ENCODE measurements at regions of chr3 and their contacts with region 1.

Region 1: GRCh38 chr3:146611096-146611495 is 6.0 kb upstream of the PLSCR5 start:
- DNase-seq: no peak
- ATAC-seq: no peak

Region 2: DNA sequence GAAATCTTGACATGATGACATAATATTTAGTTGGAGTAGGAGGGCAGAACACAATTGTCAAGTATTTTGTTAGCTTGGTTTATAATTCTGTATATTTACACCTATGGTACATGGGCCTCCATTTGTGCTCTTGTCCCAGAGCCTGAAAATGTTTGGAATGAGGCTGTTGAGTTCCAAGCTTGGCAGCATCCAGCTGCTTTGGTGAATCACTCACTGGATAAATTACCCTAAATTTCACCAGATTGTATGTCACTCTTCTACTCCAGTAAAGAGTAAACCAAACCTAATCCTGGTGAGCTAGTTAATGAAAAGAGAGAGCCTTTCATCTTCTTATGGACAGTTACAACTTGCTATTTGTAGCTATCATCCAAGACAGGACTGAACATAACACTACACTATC is 1710.7 kb before region 1 on chr3:
- intact Hi-C with region 1: loop called (anchors 5 kb)
- DNase-seq: no peak
- ATAC-seq: no peak

Region 3: DNA sequence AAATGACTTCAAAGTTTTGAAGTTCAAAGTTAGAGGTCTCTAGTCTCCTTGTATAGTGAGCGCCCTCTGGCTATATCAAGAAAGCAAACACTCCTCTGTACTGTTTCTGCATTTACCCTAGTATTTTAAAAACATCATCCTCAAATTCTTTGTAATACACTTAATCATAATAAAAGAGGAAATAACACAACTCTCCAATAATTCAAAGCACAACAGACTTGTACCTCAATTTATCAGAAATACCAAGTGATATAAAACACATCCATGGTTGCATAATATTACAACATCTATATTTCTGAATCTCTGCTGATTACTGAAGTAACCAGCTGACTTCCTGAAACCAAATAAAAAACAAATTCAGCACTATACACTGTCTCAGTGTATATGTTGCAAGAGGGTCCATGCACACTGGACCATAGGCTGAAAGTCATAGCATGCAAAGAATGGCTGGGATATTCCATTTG is 462.6 kb before region 1 on chr3:
- intact Hi-C with region 1: no loop called
- DNase-seq: no peak
- ATAC-seq: peak; percentile 37

Region 4: DNA sequence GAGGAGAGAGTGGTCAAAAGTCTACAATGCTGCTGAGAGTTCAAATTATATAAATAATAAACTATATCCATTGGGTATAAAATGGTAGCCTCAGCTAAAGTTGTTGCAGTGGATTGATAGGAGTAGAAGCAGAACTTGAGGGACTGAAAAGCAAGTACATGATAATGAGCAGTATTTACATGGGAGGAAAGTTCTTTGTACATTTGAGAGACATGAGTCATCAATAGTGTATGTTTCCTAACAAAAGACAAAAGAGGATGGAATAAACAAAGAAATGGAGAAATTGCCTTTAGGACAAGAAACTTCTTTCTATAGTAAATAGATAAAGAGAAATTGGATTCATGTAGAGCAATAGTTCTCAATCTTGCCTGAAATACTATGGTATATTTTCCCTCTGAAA is 104.1 kb after region 1 on chr3:
- intact Hi-C with region 1: no loop called
- DNase-seq: no peak
- ATAC-seq: no peak

Region 5: DNA sequence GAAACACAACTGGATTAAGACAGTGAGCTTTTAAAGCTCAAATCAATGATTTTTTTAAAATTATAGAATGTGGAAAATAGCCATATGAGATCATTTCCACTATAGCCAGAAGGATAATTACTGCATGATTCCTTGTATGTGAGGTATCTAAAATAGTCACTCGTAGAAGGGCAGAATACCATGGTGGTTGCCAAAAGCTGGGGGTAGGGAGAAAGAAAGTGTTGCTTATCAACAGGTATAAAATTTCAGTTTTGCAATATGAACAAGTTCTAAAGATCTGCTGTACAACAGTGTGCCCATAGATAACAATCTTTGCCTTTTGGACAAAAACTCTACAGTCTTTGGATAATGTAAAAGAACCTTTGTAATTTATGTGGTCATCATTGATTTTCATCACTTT is 148.2 kb after region 1 on chr3:
- intact Hi-C with region 1: no loop called
- DNase-seq: no peak
- ATAC-seq: no peak

Measured in sciatic nerve (tissue), 2 donors.